GM12878 (cell line): ENCODE measurements at regions of chr22 and their contacts with region 1.

Region 1: GRCh38 chr22:37633625-37634416 is 5.6 kb upstream of the SH3BP1 start:
- DNase-seq: peak; percentile 60
- ATAC-seq: peak; percentile 82
- H3K4me3 ChIP-seq: peak overlapping the region; percentile 57
- H3K27ac ChIP-seq: peak overlapping the region; percentile 92
- H3K4me1 ChIP-seq: peaks cover 69% of the 10 kb centered on the region
- H3K27me3 ChIP-seq: no peaks in the 10 kb centered on the region
- CTCF ChIP-seq: peak in 1 of 3 experiments; percentile 18; a peak in 3 of 6 replicates
- EP300 ChIP-seq: peak; percentile 29 to 35; a peak in 3 of 4 replicates
- POLR2A ChIP-seq: peak; percentile 82
- RAD21 ChIP-seq: no peak

Region 2: DNA sequence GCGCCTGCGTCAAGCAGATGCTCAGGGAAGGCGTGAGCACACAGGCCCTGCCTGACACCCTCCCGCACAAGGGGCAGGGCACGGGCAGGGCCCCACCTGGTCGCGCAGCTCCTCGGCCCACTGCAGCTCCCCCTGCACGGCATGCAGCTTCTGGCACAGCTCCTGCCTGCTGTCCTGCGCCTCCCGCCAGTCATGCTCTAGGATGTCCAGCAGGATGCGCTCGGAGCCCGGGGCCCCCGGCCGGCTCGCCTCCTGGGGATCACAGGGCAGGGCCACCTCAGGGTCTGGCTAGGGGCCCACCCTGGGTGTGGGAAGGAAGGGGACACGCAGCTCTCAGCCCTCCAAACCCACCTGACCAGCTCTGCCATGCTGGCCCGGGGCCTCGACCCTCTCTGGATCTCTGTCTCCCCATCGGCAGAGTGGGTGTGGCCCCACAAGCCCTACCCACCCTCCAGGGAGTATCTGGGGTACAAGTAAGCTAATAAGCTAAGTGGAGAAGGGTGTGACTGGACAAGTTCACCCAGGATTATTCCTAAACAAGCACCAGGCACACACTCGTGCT is 125.3 kb before region 1 on chr22:
- CTCF ChIA-PET with region 1: no interaction called
- POLR2A ChIA-PET with region 1: no interaction called
- RAD21 ChIA-PET with region 1: no interaction called
- SMC1A ChIA-PET with region 1: no interaction called
- in situ Hi-C with region 1: no loop called
- intact Hi-C with region 1: no loop called
- DNase-seq: no peak
- ATAC-seq: no peak
- H3K4me3 ChIP-seq: no peak overlapping the region
- H3K27ac ChIP-seq: no peak overlapping the region
- H3K4me1 ChIP-seq: no peaks in the 10 kb centered on the region
- H3K27me3 ChIP-seq: no peaks in the 10 kb centered on the region
- CTCF ChIP-seq: no peak
- EP300 ChIP-seq: no peak
- POLR2A ChIP-seq: no peak
- RAD21 ChIP-seq: no peak

Region 3: GRCh38 chr22:37618072-37618656 is 15.7 kb before region 1 on chr22:
- CTCF ChIA-PET with region 1: interaction called, 275 read pairs
- POLR2A ChIA-PET with region 1: no interaction called
- RAD21 ChIA-PET with region 1: interaction called, 5 read pairs
- SMC1A ChIA-PET with region 1: interaction called, 4 read pairs
- in situ Hi-C with region 1: no loop called
- intact Hi-C with region 1: no loop called
- DNase-seq: no peak
- ATAC-seq: peak; percentile 60
- H3K4me3 ChIP-seq: no peak overlapping the region
- H3K27ac ChIP-seq: no peak overlapping the region; the same call in 1 of the 2 replicates
- H3K4me1 ChIP-seq: peaks cover 6% of the 10 kb centered on the region
- H3K27me3 ChIP-seq: no peaks in the 10 kb centered on the region
- CTCF ChIP-seq: no peak
- EP300 ChIP-seq: no peak
- POLR2A ChIP-seq: no peak
- RAD21 ChIP-seq: no peak

Region 4: DNA sequence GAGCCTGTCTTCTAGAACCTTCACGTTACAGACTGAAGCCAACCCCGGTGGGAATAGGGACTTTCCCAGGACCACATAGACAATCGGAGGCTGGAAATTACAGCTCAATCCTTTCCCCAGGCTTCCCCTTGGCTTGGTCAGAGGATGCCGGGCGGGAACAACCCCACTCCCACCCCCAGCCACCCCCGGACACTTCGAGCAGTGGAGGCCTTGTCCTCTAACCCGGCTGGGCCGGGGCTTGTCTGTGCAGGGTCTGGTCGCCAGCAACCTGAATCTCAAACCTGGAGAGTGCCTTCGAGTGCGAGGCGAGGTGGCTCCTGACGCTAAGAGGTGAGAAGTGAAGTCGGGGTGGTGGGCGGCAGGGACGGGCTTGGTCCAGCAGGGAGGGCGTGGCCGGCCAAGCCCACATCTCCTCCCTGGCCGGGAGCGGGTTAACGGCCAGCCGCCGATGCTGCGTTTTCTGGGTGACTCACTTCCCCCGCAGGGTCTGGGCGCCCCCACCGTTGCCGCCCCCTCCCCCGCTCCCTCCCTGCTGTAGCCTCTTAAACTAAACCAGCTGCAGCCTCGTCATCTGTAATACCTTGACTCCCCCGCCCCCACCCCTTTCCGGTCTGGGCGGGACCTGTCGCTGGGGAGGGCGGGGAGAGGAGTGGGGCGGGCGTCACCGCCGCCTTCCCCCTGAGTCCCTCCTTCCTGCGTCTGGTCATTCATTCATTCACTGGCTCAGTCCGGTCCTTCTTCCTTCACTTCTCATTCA is 43.1 kb after region 1 on chr22:
- CTCF ChIA-PET with region 1: interaction called, 396 read pairs
- POLR2A ChIA-PET with region 1: interaction called, 29 read pairs
- RAD21 ChIA-PET with region 1: interaction called, 20 read pairs
- SMC1A ChIA-PET with region 1: interaction called, 15 read pairs
- in situ Hi-C with region 1: loop called (anchors 5 kb)
- intact Hi-C with region 1: loop called (anchors 2 kb)
- DNase-seq: no peak
- ATAC-seq: peak; percentile 73
- H3K4me3 ChIP-seq: peak overlapping the region; percentile 91
- H3K27ac ChIP-seq: peak overlapping the region; percentile 85
- H3K4me1 ChIP-seq: peaks cover 37% of the 10 kb centered on the region
- H3K27me3 ChIP-seq: no peaks in the 10 kb centered on the region
- CTCF ChIP-seq: no peak
- EP300 ChIP-seq: no peak
- POLR2A ChIP-seq: peak; percentile 78
- RAD21 ChIP-seq: no peak

Region 5: GRCh38 chr22:37686002-37686982 is 52.5 kb after region 1 on chr22 and contains the start of gene NOL12:
- CTCF ChIA-PET with region 1: interaction called, 396 read pairs
- POLR2A ChIA-PET with region 1: interaction called, 6 read pairs
- RAD21 ChIA-PET with region 1: interaction called, 7 read pairs
- SMC1A ChIA-PET with region 1: interaction called, 13 read pairs
- in situ Hi-C with region 1: loop called (anchors 5 kb)
- intact Hi-C with region 1: no loop called
- DNase-seq: peak; percentile 72
- ATAC-seq: peak; percentile 90
- H3K4me3 ChIP-seq: peak within 1 kb of the TSS; percentile 100
- H3K27ac ChIP-seq: peak within 1 kb of the TSS; percentile 89
- H3K4me1 ChIP-seq: peaks cover 17% of the 10 kb centered on the region
- H3K27me3 ChIP-seq: no peaks in the 10 kb centered on the region
- CTCF ChIP-seq: 0 out of 6 replicates have a peak, but pooled peaks of 1 of the 3 experiments have one; percentile 5
- EP300 ChIP-seq: no peak
- POLR2A ChIP-seq: peak; percentile 86
- RAD21 ChIP-seq: no peak
- polyA plus RNA-seq, gene NOL12: 3.3 to 12.9 TPM